Activated T-helper 1 cell treated with anti-CD3 and anti-CD28 coated beads, Interleukin-12 subunit alpha, Interleukin-12 subunit beta, Interleukin-2, Interleukin-4 antibody, amounts not matched to agents 30 ng/mL and 10 ng/mL and 1 ng/mL, durations not matched to agents 14 hours and 24 hours and 36 hours (primary cell): ENCODE measurements at regions of chr2 and their contacts with region 1.

Region 1: GRCh38 chr2:46146891-46147502 is 150.2 kb upstream of the EPAS1 start:
- DNase-seq: no peak
- H3K4me3 Mint-ChIP-seq: no peak overlapping the region
- H3K27ac Mint-ChIP-seq: no peak overlapping the region
- H3K4me1 Mint-ChIP-seq: peaks cover 26% of the 10 kb centered on the region
- H3K27me3 Mint-ChIP-seq: no peaks in the 10 kb centered on the region

Region 2: GRCh38 chr2:46067851-46068305 is 79.1 kb before region 1 on chr2:
- intact Hi-C with region 1: loop called (anchors 1 kb)
- DNase-seq: no peak
- H3K4me3 Mint-ChIP-seq: no peak overlapping the region
- H3K27ac Mint-ChIP-seq: no peak overlapping the region
- H3K4me1 Mint-ChIP-seq: peaks cover 20% of the 10 kb centered on the region
- H3K27me3 Mint-ChIP-seq: no peaks in the 10 kb centered on the region